Naive thymus-derived CD4-positive, alpha-beta T cell (primary cell): ENCODE measurements at regions of chr1 and their contacts with region 1.

Region 1: DNA sequence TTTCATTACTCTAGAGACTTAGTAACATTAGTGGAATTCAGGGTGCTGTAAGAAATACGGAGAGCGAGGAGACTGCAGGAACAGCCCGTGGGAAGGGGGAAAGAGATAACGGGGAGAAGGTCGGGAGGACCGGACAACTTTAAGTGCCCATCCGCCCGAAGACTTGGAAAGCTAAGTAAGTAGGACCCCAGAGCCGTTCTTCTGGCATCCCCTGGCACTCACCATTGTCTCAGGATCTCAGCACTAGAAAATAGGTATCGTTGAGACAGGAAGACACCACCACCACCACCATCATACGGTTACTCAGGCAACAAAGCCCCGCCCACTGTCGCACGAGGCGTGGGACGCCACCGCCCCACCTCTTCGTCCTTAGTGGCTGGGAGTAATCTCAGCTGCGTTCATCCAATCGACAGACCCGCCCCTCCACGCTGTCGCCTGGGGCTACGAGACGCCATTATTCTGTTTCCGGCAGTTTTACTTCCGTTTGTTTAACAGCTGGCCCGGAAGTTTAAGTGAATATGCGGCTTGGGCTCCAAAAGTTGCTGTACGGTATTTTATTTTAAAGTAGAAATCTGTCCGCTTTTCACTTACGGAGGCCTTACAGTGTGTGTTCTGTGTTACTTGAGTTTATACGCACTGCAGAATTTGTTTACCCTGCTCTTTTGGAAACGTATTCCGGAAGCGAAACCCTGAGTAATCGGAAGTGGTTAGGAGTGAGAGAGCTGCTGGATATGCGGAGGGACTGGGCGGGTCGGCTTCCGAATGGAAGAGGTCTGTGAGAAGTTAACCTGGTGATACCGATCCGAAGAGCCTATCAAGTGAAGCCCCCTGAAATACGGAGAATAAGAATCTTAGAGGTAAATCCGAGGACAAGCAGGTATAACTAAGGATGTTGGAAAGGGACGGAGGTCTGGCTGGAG is at the starts of genes BLZF1 and NME7:
- DNase-seq: peak; percentile 91 to 99 (median 98)
- ATAC-seq: peak; percentile 99
- H3K4me3 ChIP-seq: peak within 1 kb of the TSS; percentile 87
- H3K4me3 Mint-ChIP-seq: peak within 1 kb of the TSS in 3 of 10 donors; percentile 19 to 72 (median 71)
- H3K27ac ChIP-seq: peak within 1 kb of the TSS; percentile 85
- H3K27ac Mint-ChIP-seq: peak within 1 kb of the TSS in 2 of 9 donors; percentile 73 to 78
- H3K4me1 ChIP-seq: peaks cover 4 to 14% of the 10 kb centered on the region in 2 donors
- H3K4me1 Mint-ChIP-seq: peaks cover 20 to 48% (median 28%) of the 10 kb centered on the region in 7 donors
- H3K27me3 ChIP-seq: no peaks in the 10 kb centered on the region
- H3K27me3 Mint-ChIP-seq: no peaks in the 10 kb centered on the region
- total RNA-seq, gene BLZF1: 9.9 to 26.8 (median 17.5) TPM
- total RNA-seq, gene NME7: 8.6 to 14.5 (median 12.7) TPM

Region 2: DNA sequence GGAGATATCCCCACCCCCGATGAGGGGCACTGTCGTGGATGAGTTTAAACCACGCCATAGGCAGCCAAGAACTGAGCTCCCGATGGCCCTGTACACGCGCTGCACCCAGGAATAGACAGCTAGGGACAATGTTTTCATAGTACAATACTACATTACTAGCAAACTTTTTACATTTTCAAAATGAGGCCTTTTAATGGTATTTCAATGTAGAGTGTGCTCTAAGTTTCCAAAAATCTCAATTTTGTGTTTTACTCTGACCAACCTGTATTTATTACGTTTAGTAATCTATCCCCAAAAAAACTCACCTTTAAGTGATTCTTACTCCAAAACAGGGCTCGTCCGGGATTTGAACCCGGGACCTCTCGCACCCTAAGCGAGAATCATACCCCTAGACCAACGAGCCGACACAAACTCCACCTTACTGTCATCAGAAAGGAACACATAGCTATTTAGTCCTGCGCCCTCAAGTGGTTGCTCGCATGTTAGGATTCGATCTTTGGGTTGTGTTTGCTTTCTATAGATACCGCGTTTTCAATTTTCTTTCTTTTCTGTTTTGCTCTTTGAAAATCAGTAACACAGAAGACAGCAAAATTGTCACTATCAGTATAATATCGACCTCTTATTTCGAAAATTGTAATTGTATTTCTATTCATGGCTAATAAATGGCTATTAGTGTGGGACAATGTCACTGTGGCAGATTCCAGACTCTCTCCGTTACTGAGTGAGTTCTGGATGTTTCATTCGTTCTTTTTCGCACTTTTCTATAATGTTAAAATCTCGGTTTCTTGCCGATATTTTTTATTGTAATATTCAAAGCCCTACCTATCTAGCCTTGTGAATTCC is 1652.4 kb before region 1 on chr1:
- CTCF ChIA-PET with region 1: no interaction called
- POLR2A ChIA-PET with region 1: no interaction called
- intact Hi-C with region 1: loop called in 1 of 2 experiments (anchors 2 kb)
- DNase-seq: peak; percentile 66 to 91 (median 89)
- ATAC-seq: peak; percentile 81
- H3K4me3 ChIP-seq: peak overlapping the region; percentile 88
- H3K4me3 Mint-ChIP-seq: peak overlapping the region; percentile 89 to 98 (median 93)
- H3K27ac ChIP-seq: peak overlapping the region; percentile 48
- H3K27ac Mint-ChIP-seq: peak overlapping the region; percentile 87 to 100 (median 98)
- H3K4me1 ChIP-seq: peaks cover 4 to 13% of the 10 kb centered on the region in 2 donors
- H3K4me1 Mint-ChIP-seq: peaks cover 26 to 53% (median 45%) of the 10 kb centered on the region in 7 donors
- H3K27me3 ChIP-seq: no peaks in the 10 kb centered on the region
- H3K27me3 Mint-ChIP-seq: peaks cover 0 to 16% (median 0%) of the 10 kb centered on the region in 5 donors

Region 3: GRCh38 chr1:168342572-168343280 is 1025.0 kb before region 1 on chr1:
- CTCF ChIA-PET with region 1: no interaction called
- POLR2A ChIA-PET with region 1: interaction called, 4 read pairs
- intact Hi-C with region 1: loop called (anchors 1 to 5 kb)
- DNase-seq: peak; percentile 66 to 90 (median 86)
- ATAC-seq: peak; percentile 100
- H3K4me3 ChIP-seq: peak overlapping the region; percentile 30
- H3K4me3 Mint-ChIP-seq: peak overlapping the region in 9 of 10 donors; percentile 5 to 66 (median 57)
- H3K27ac ChIP-seq: peak overlapping the region; percentile 12
- H3K27ac Mint-ChIP-seq: peak overlapping the region; percentile 80 to 96 (median 90)
- H3K4me1 ChIP-seq: peaks cover 0 to 33% of the 10 kb centered on the region in 2 donors
- H3K4me1 Mint-ChIP-seq: peaks cover 13 to 55% (median 31%) of the 10 kb centered on the region in 7 donors
- H3K27me3 ChIP-seq: no peaks in the 10 kb centered on the region
- H3K27me3 Mint-ChIP-seq: no peaks in the 10 kb centered on the region

Region 4: DNA sequence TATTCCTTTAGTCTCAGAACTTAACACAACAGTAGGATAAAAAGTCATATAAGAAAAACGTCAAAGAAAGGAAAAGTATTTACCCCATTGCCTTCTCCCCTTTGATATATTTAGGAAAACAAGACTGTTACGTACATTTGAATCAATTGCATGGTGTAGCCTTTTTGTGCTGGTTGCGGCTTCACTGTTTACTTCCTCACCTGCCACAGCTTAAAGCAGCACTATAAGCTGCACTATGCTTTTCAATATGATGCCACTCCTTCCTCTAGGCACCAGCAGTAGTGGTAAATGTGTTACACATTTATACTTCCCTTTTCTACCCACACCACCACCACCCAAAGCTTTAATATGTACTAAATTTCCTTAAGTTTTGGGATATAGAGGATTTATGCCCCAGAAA is 150.1 kb before region 1 on chr1:
- CTCF ChIA-PET with region 1: no interaction called
- POLR2A ChIA-PET with region 1: no interaction called
- intact Hi-C with region 1: no loop called
- DNase-seq: peak in 4 of 9 donors; percentile 0 to 19 (median 4)
- ATAC-seq: peak; percentile 67
- H3K4me3 ChIP-seq: no peak overlapping the region
- H3K4me3 Mint-ChIP-seq: peak overlapping the region in 2 of 10 donors; percentile 33 to 44
- H3K27ac ChIP-seq: no peak overlapping the region
- H3K27ac Mint-ChIP-seq: no peak overlapping the region
- H3K4me1 ChIP-seq: no peaks in the 10 kb centered on the region
- H3K4me1 Mint-ChIP-seq: peaks cover 0 to 9% (median 2%) of the 10 kb centered on the region in 7 donors
- H3K27me3 ChIP-seq: no peaks in the 10 kb centered on the region
- H3K27me3 Mint-ChIP-seq: no peaks in the 10 kb centered on the region

Region 5: GRCh38 chr1:169271098-169271497 is 96.6 kb before region 1 on chr1:
- CTCF ChIA-PET with region 1: no interaction called
- POLR2A ChIA-PET with region 1: no interaction called
- intact Hi-C with region 1: no loop called
- DNase-seq: no peak
- ATAC-seq: peak; percentile 44
- H3K4me3 ChIP-seq: no peak overlapping the region
- H3K4me3 Mint-ChIP-seq: no peak overlapping the region
- H3K27ac ChIP-seq: no peak overlapping the region
- H3K27ac Mint-ChIP-seq: no peak overlapping the region
- H3K4me1 ChIP-seq: no peaks in the 10 kb centered on the region
- H3K4me1 Mint-ChIP-seq: peaks cover 0 to 5% (median 0%) of the 10 kb centered on the region in 7 donors
- H3K27me3 ChIP-seq: no peaks in the 10 kb centered on the region
- H3K27me3 Mint-ChIP-seq: no peaks in the 10 kb centered on the region

Region 6: GRCh38 chr1:169427081-169427641 is 59.4 kb after region 1 on chr1 and contains the start of gene CCDC181:
- CTCF ChIA-PET with region 1: no interaction called
- POLR2A ChIA-PET with region 1: no interaction called
- intact Hi-C with region 1: loop called in 1 of 2 experiments (anchors 2 kb)
- DNase-seq: peak in 8 of 9 donors; percentile 9 to 65 (median 40)
- ATAC-seq: peak; percentile 76
- H3K4me3 ChIP-seq: peak within 1 kb of the TSS; percentile 51
- H3K4me3 Mint-ChIP-seq: peak within 1 kb of the TSS; percentile 84 to 96 (median 92)
- H3K27ac ChIP-seq: no peak within 1 kb of the TSS
- H3K27ac Mint-ChIP-seq: peak within 1 kb of the TSS in 5 of 9 donors; percentile 4 to 76 (median 68)
- H3K4me1 ChIP-seq: peaks cover 0 to 3% of the 10 kb centered on the region in 2 donors
- H3K4me1 Mint-ChIP-seq: peaks cover 5 to 8% (median 7%) of the 10 kb centered on the region in 7 donors
- H3K27me3 ChIP-seq: peaks cover 8 to 20% of the 10 kb centered on the region in 2 donors
- H3K27me3 Mint-ChIP-seq: peaks cover 67 to 88% (median 79%) of the 10 kb centered on the region in 5 donors
- total RNA-seq, gene CCDC181: not detected

Region 7: DNA sequence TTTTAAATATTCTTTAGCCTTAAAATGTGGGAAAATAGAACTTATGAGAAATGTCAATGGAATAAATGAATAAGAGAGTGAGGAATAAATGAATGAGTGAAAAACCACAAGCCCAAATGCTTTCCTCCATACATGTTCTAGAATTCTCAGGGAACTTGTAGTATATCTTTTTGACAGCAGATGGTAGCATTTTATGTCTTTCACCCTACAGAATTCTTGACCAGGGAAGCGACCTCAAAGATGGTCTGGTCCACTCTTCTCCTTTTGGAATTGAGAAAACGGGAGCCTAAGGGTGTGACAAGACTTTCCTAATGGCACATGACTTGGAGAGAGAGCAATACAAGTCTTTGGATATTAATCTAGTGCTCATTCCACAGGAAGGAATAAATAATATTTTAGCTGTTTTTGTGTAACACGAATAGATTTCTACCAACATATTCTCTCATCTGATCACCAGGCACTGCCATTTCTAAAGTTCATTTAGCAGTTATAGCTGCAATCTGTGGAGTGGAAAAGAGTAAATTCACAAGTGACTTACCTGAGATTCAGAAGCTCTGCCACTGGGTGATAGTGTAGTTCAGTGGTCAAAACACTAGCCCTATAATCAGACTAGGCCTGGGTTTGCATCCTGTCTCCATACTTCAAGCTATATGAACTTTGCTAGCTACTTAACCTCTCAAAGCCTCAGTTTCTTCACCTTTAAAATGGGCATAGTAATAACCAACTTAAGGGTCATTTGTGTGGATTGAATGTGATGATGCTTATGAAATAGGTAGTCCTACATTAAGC is 233.5 kb after region 1 on chr1:
- CTCF ChIA-PET with region 1: interaction called, 3 read pairs
- POLR2A ChIA-PET with region 1: no interaction called
- intact Hi-C with region 1: loop called in 1 of 2 experiments (anchors 5 kb)
- DNase-seq: peak in 6 of 9 donors; percentile 17 to 51 (median 36)
- ATAC-seq: no peak
- H3K4me3 ChIP-seq: no peak overlapping the region
- H3K4me3 Mint-ChIP-seq: peak overlapping the region in 6 of 10 donors; percentile 38 to 79 (median 54)
- H3K27ac ChIP-seq: peak overlapping the region; percentile 61
- H3K27ac Mint-ChIP-seq: peak overlapping the region; percentile 47 to 96 (median 89)
- H3K4me1 ChIP-seq: peaks cover 17 to 49% of the 10 kb centered on the region in 2 donors
- H3K4me1 Mint-ChIP-seq: peaks cover 43 to 58% (median 55%) of the 10 kb centered on the region in 7 donors
- H3K27me3 ChIP-seq: no peaks in the 10 kb centered on the region
- H3K27me3 Mint-ChIP-seq: peaks cover 0 to 2% (median 0%) of the 10 kb centered on the region in 5 donors

Region 8: DNA sequence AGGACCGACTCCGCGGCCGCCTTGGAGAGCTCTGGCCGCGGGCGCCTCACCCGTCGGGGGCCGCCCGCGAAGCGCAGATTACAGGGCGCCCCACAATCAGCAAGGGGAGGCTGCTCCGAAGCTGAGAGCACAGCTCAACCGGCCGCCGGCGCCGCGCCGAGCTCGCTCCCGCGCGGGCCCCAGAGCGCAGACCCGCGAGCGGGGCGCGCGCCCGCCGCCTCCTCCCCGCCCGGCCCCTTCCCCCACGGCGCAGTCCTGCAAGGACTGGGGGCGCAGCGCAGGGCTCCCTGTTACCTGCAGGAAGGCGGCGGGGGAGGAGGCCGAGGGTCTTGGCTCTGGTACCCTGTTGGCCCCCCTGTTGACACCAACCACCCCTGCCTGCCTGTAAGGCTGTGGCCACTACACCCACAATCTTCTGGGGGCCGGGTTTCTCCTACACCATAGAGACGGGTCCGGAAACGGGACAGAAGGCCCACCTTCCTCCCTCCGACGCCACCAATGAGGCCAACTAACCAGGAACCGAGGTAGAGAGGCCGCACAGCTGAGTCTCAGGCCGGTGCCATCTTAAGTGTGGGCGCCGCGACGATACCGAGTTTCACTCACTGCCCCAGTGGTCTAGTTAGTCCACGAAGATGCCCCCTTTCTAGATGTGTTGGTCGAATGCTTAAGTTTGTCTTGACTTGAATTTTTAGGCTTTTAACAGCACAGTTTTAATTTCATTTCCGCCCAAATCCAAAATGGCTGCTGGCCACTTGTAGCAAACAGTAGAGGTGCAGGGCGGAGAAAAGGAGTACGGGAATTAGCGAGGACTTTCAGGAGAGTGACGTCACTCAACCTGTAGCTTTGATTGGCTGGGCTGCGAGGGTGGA is 526.0 kb after region 1 on chr1 and contains the start of gene SCYL3:
- CTCF ChIA-PET with region 1: no interaction called
- POLR2A ChIA-PET with region 1: interaction called, 7 read pairs
- intact Hi-C with region 1: loop called (anchors 1 kb)
- DNase-seq: peak; percentile 85 to 97 (median 95)
- ATAC-seq: peak; percentile 92
- H3K4me3 ChIP-seq: peak within 1 kb of the TSS; percentile 77
- H3K4me3 Mint-ChIP-seq: peak within 1 kb of the TSS; percentile 85 to 97 (median 94)
- H3K27ac ChIP-seq: peak within 1 kb of the TSS; percentile 95
- H3K27ac Mint-ChIP-seq: peak within 1 kb of the TSS; percentile 98 to 100 (median 100)
- H3K4me1 ChIP-seq: peaks cover 25 to 28% of the 10 kb centered on the region in 2 donors
- H3K4me1 Mint-ChIP-seq: peaks cover 26 to 51% (median 46%) of the 10 kb centered on the region in 7 donors
- H3K27me3 ChIP-seq: no peaks in the 10 kb centered on the region
- H3K27me3 Mint-ChIP-seq: peaks cover 0 to 18% (median 4%) of the 10 kb centered on the region in 5 donors
- total RNA-seq, gene SCYL3: 9.5 to 22.7 (median 17.3) TPM